GM13976 (cell line): ENCODE measurements at regions of chr4 and their contacts with region 1.

Region 1: GRCh38 chr4:180664766-180665368 is 1578.3 kb upstream of the TENM3 start:
- DNase-seq: peak; percentile 46
- CTCF ChIP-seq: peak; percentile 74

Region 2: GRCh38 chr4:179867300-179867878 is 797.5 kb before region 1 on chr4:
- in situ Hi-C with region 1: loop called (anchors 25 kb)
- DNase-seq: peak; percentile 62
- CTCF ChIP-seq: peak; percentile 79

Region 3: GRCh38 chr4:180058731-180059215 is 606.1 kb before region 1 on chr4:
- in situ Hi-C with region 1: loop called (anchors 25 kb)
- DNase-seq: peak; percentile 71
- CTCF ChIP-seq: no peak

Region 4: DNA sequence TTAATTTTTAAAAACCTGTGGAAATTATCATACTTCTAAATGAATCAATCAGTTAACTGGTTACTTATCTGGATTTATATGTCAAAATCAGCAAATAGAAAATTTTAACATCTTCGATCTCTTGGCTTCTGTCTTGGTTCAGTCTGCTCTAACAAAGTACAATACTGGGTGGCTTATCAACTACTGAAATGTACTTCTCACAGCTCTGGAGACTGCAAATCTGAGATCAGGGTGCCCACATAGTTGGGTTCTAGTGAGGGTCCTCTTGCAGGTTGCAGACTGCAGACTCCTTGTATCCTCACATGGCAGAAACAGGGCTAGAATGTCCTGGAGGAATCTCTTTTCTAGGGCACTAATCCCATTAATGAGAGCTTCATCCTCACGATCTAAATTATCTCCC is 273.3 kb before region 1 on chr4:
- in situ Hi-C with region 1: no loop called
- DNase-seq: no peak
- CTCF ChIP-seq: no peak